ENCODE measurements at regions of chr16 and their contacts with region 1.

Region 1: DNA sequence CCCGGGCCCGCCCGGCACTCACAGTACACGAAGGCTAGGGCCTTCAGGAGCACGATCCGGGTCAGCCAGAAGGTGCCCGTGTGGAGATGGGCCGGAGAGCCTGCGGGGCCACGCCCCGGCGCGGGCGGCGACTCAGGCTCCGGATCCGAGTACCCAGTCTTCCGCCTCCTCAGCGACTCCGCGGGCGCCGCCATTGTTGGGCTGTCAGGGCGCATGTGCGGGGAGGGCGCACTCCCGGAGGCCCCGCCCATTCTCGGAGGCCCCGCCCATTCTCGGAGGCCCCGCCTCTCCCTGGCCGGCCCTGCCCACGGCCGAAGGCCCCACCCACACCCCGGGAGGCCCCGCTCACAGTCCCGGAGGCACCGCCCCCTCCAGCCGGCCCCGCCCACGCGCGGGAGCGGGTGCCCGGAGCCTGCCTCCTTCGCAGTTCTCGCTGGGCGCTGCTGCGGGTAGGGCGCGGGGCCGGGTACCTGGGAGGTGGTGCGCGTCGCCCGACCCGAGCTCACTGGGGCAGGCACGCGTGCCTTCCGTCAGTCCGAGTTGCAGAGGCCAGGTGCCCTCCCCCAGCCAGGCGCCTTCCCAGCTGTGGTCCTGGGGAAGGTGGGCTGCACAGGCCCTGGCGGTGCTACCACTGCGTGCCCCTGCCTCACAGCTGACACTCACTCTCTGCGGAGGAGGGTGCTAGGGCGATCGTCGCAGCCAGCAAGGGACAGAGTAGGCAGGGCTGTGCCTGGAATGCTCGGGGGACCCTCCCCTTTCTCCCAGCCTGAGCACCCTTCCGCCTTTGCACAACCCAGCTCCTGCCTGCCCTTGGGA is at the start of gene LMF1:
- DNase-seq: peak; percentile 92 to 100 (median 96)
- ATAC-seq: peak; percentile 96
- H3K4me3 ChIP-seq: peak within 1 kb of the TSS; percentile 66
- H3K4me3 Mint-ChIP-seq: peak within 1 kb of the TSS; percentile 90
- H3K27ac ChIP-seq: peak within 1 kb of the TSS; percentile 44 to 53
- H3K27ac Mint-ChIP-seq: peak within 1 kb of the TSS; percentile 66
- H3K4me1 ChIP-seq: peaks cover 30% of the 10 kb centered on the region
- H3K4me1 Mint-ChIP-seq: peaks cover 27% of the 10 kb centered on the region
- H3K27me3 ChIP-seq: no peaks in the 10 kb centered on the region
- H3K27me3 Mint-ChIP-seq: no peaks in the 10 kb centered on the region
- CTCF ChIP-seq: no peak
- total RNA-seq, gene LMF1: 26.8 to 27.6 TPM

Region 2: DNA sequence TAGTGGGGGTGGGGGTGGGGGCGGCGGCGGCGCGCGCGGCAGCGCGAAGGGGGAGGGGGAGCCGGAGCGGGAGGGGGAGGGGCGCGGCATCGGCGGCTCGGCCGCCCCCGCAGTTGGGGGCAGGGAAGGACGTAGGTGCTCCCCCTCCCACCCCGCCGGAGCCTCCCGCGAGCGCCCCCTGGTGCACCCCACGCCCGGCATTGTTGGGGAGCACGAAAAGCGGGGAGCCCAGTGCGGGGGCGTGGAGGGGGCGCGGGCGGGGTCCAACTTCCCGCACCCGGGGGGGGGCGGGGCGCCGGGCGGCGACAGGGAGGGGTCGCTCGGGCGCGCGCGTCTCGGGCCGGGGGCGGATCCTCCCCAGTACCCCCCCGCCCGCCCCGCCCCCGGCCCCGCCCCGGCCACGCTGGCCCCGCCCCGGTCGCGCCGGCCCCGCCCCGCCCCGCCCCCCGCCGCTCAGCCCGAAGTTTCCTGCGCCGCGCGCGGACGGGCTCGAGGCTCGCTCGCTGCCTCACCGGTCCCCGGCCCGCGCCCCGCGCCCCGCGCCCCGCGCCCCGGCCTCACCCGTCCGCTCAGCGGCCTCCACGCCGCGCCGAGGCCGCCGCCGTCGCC is 181.8 kb after region 1 on chr16 and contains the start of gene CACNA1H:
- CTCF ChIA-PET with region 1: no interaction called
- POLR2A ChIA-PET with region 1: no interaction called
- intact Hi-C with region 1: loop called in 1 of 2 experiments (anchors 2 kb)
- DNase-seq: peak; percentile 41 to 80 (median 58)
- ATAC-seq: peak; percentile 68
- H3K4me3 ChIP-seq: peak within 1 kb of the TSS; percentile 48
- H3K4me3 Mint-ChIP-seq: peak within 1 kb of the TSS; percentile 51
- H3K27ac ChIP-seq: no peak within 1 kb of the TSS
- H3K27ac Mint-ChIP-seq: no peak within 1 kb of the TSS
- H3K4me1 ChIP-seq: peaks cover 18% of the 10 kb centered on the region
- H3K4me1 Mint-ChIP-seq: no peaks in the 10 kb centered on the region
- H3K27me3 ChIP-seq: peaks cover 23 to 34% of the 10 kb centered on the region in 2 experiments
- H3K27me3 Mint-ChIP-seq: peaks cover 12% of the 10 kb centered on the region
- CTCF ChIP-seq: no peak
- total RNA-seq, gene CACNA1H: 5.7 to 6.3 TPM

Region 3: GRCh38 chr16:1257561-1258224 is 286.7 kb after region 1 on chr16:
- CTCF ChIA-PET with region 1: no interaction called
- POLR2A ChIA-PET with region 1: no interaction called
- intact Hi-C with region 1: no loop called
- DNase-seq: no peak
- ATAC-seq: no peak
- H3K4me3 ChIP-seq: no peak overlapping the region
- H3K4me3 Mint-ChIP-seq: no peak overlapping the region
- H3K27ac ChIP-seq: no peak overlapping the region
- H3K27ac Mint-ChIP-seq: no peak overlapping the region
- H3K4me1 ChIP-seq: peaks cover 11% of the 10 kb centered on the region
- H3K4me1 Mint-ChIP-seq: peaks cover 5% of the 10 kb centered on the region
- H3K27me3 ChIP-seq: peaks cover 30 to 36% of the 10 kb centered on the region in 2 experiments
- H3K27me3 Mint-ChIP-seq: peaks cover 23% of the 10 kb centered on the region
- CTCF ChIP-seq: no peak